ENCODE measurements at regions of chr4 and their contacts with region 1.

Region 1: GRCh38 chr4:174222266-174222872 is 61.1 kb downstream of the FBXO8 start:
- DNase-seq: no peak
- H3K4me3 ChIP-seq: no peak overlapping the region
- H3K27ac ChIP-seq: no peak overlapping the region
- H3K4me1 ChIP-seq: peaks cover 5% of the 10 kb centered on the region
- H3K27me3 ChIP-seq: peaks cover 13% of the 10 kb centered on the region
- CTCF ChIP-seq: peak; percentile 62

Region 2: DNA sequence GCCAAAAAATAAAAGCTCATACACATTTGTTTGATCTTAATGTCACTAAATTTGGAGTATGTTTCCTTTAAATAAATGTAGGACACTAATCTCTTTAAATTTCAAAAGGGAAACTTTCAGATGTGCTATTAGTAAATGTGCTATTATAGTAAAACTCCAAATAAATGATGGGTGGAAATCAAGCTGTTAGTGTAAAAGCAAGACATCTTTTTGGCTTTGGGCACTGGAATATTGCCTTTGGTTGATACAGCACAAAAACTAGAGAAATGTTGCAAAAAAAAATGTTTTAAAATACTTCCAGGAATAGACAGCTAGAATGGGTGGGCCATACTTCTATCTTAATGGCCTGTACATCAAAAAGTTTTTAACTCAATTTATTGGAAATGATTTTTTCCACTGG is 90.5 kb before region 1 on chr4:
- intact Hi-C with region 1: no loop called
- DNase-seq: no peak
- H3K4me3 ChIP-seq: no peak overlapping the region
- H3K27ac ChIP-seq: no peak overlapping the region
- H3K4me1 ChIP-seq: no peaks in the 10 kb centered on the region
- H3K27me3 ChIP-seq: no peaks in the 10 kb centered on the region
- CTCF ChIP-seq: no peak

Region 3: GRCh38 chr4:174318829-174319764 is 96.7 kb after region 1 on chr4:
- intact Hi-C with region 1: loop called (anchors 2 kb)
- DNase-seq: no peak
- H3K4me3 ChIP-seq: no peak overlapping the region
- H3K27ac ChIP-seq: no peak overlapping the region
- H3K4me1 ChIP-seq: no peaks in the 10 kb centered on the region
- H3K27me3 ChIP-seq: no peaks in the 10 kb centered on the region
- CTCF ChIP-seq: peak; percentile 62

Region 4: DNA sequence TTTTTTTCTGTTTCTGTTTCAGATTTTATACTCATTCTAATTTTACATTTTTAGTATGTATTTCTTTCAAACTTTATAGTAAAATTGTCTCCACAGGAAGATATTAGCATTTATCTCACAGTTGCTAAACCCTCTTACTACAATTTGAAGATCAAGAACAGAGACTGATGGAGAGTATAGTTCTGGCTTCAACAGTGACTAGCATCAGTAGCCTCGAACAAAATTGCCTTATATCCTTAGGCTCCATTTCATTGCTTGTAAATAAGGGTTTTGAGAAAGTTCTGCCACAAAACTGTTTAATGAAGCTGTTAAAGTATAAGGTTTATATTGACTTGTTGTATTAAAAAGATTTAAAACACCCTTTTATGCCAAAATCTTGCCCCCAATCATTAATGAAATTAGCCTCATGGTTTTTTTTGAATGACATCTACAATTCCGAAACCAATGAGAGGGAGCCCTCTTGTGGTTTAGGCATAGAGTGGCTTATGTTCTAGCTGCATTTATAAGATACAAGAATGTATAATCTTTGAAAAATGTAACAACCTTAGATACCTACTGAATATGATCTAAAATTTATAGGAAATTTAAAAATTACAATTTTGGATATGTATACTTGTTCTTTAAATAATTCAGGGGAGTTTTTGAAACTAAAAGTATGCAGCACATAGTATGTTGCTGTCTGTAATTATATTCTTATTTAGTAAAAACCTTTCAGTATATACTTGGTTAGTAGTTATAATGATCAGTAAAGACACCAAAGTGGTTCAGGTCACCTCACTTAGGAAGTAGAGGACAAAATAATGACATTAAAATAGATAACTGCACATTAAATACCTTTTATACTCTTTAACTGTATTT is 409.8 kb after region 1 on chr4:
- intact Hi-C with region 1: no loop called
- DNase-seq: no peak
- H3K4me3 ChIP-seq: no peak overlapping the region
- H3K27ac ChIP-seq: no peak overlapping the region
- H3K4me1 ChIP-seq: no peaks in the 10 kb centered on the region
- H3K27me3 ChIP-seq: no peaks in the 10 kb centered on the region
- CTCF ChIP-seq: peak; percentile 67